HEK293T (cell line): ENCODE measurements at regions of chr1 and their contacts with region 1.

Region 1: DNA sequence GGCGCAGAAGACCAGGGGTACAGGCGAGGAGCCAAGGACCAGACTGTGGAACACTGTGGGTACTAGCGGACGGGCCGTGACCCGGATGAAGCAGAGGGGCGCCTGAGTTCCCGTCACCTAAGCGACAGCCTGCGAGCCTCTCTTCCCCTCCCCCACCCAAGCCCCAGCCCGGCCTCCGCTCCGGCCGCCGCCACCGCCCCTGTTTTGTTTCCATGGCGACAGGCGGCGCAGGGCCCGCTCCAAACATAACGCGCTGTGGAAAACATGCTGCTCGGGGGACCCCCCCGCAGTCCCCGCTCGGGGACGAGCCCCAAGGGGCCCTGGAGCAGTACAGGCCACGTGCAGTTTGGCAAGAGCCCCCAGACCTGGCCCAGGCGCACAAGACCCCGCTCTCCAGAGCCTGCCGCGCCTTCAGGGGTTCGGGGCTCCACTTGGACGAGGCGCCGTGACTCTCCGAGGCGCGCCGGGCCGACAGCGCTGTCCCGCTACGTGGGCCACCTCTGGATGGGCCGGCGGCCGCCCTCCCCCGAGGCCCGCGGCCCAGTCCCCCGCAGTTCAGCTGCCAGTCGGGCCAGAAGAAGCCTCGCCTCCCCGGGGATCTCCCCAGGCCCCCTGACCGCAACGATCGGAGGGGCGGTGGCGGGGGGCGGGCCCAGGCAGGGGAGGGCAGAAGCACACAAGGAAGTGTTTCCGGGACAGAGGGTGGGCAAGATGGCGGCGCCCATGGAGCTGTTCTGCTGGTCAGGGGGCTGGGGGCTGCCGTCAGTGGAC is at the start of gene MTX1:
- DNase-seq: peak; percentile 90

Region 2: GRCh38 chr1:155193275-155193990 is 15.3 kb before region 1 on chr1:
- CTCF ChIA-PET with region 1: interaction called, 17 read pairs
- POLR2A ChIA-PET with region 1: interaction called, 67 read pairs
- DNase-seq: peak; percentile 93

Region 3: DNA sequence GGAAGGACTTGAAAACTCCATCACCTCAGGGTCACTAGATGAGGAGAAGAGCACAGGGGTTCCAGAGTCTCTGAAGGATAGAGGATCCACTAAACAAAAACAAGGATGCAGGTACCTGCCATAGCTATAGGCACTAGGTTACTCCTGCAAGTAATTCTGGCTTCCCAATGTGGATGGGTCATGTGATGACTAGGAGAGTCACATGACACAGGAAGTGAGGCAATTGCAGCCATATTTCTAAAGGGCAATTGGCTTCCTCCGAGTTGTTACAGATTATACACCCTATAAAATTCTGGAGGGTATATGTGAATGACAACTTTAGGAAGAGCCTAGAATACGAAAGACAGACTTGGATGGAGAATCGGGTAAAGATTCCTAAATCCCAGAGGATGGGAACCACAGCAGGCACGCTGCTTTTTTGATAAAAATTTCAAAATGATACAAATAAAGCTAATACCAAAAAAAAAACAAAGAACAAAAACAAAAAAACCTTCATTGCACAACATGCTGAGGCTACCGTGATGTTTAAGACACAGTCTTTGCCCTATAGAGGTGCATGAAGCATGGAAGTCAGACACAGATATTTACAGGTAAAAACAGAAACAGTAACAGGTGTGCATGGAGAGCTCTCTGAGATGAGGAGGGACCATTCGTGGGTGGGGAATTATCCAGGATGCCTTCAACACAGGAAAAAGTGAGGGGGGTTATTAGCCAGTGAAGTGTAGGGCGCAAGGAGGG is 10.3 kb after region 1 on chr1:
- CTCF ChIA-PET with region 1: interaction called, 10 read pairs
- POLR2A ChIA-PET with region 1: interaction called, 10 read pairs
- DNase-seq: peak; percentile 74

Region 4: GRCh38 chr1:155227261-155228095 is 18.8 kb after region 1 on chr1:
- CTCF ChIA-PET with region 1: interaction called, 20 read pairs
- POLR2A ChIA-PET with region 1: interaction called, 37 read pairs
- DNase-seq: peak; percentile 100

Region 5: DNA sequence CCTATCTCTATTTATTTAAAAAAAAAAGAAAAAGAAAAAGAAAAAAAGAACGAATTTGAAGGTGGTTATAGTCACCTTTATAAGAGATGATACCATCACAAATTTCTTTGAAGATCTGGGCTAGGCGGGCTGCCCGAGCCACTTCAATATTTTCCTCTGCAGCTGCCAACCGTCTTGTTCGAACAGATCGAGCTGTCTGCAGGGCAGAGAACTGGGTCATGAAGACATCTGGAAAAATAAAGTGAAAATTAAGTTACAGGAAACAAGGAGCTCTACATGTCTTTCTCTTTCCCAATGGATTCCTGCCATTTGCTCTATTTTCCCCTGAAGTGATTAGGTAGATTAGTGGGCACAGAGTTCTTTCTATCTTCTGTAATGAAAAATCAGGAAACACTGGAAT is 143.9 kb after region 1 on chr1:
- CTCF ChIA-PET with region 1: no interaction called
- POLR2A ChIA-PET with region 1: no interaction called
- DNase-seq: no peak

Region 6: GRCh38 chr1:155669233-155670162 is 460.8 kb after region 1 on chr1:
- CTCF ChIA-PET with region 1: no interaction called
- POLR2A ChIA-PET with region 1: no interaction called
- DNase-seq: no peak